Naive thymus-derived CD4-positive, alpha-beta T cell (primary cell): ENCODE measurements at regions of chr5 and their contacts with region 1.

Region 1: GRCh38 chr5:102681407-102681983 is 73.6 kb upstream of the PAM start:
- DNase-seq: peak in 7 of 9 donors; percentile 7 to 60 (median 25)
- ATAC-seq: peak; percentile 63
- H3K4me3 ChIP-seq: no peak overlapping the region
- H3K4me3 Mint-ChIP-seq: no peak overlapping the region
- H3K27ac ChIP-seq: no peak overlapping the region
- H3K27ac Mint-ChIP-seq: no peak overlapping the region
- H3K4me1 ChIP-seq: no peaks in the 10 kb centered on the region
- H3K4me1 Mint-ChIP-seq: no peaks in the 10 kb centered on the region
- H3K27me3 ChIP-seq: no peaks in the 10 kb centered on the region
- H3K27me3 Mint-ChIP-seq: peaks cover 0 to 7% (median 4%) of the 10 kb centered on the region in 5 donors

Region 2: DNA sequence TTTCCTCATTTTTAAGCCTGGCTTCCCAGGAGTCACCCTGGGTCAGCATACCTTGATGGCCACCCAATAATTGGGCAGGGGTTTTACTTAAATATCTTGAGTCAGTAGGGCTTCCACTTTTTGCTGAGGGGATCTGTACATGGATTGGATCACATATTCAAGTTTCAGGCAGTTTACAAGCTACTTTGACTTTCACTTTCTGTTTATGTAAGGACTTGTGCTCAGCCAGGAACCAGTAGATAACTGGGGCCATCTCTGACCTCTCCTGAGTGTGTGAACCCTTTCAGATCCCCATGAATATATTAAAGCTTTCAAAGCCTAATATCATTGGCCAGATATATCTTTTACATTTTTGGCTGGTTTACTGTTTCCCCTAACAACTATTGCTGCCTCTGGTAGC is 227.8 kb before region 1 on chr5:
- CTCF ChIA-PET with region 1: no interaction called
- POLR2A ChIA-PET with region 1: no interaction called
- intact Hi-C with region 1: no loop called
- DNase-seq: no peak
- ATAC-seq: no peak
- H3K4me3 ChIP-seq: no peak overlapping the region
- H3K4me3 Mint-ChIP-seq: peak overlapping the region in 1 of 10 donors; percentile 35
- H3K27ac ChIP-seq: no peak overlapping the region
- H3K27ac Mint-ChIP-seq: no peak overlapping the region
- H3K4me1 ChIP-seq: no peaks in the 10 kb centered on the region
- H3K4me1 Mint-ChIP-seq: peaks cover 0 to 8% (median 0%) of the 10 kb centered on the region in 7 donors
- H3K27me3 ChIP-seq: no peaks in the 10 kb centered on the region
- H3K27me3 Mint-ChIP-seq: peaks cover 0 to 11% (median 0%) of the 10 kb centered on the region in 5 donors

Region 3: GRCh38 chr5:102718819-102719218 is 37.3 kb after region 1 on chr5:
- CTCF ChIA-PET with region 1: no interaction called
- POLR2A ChIA-PET with region 1: no interaction called
- intact Hi-C with region 1: no loop called
- DNase-seq: no peak
- ATAC-seq: no peak
- H3K4me3 ChIP-seq: no peak overlapping the region
- H3K4me3 Mint-ChIP-seq: no peak overlapping the region
- H3K27ac ChIP-seq: no peak overlapping the region
- H3K27ac Mint-ChIP-seq: no peak overlapping the region
- H3K4me1 ChIP-seq: no peaks in the 10 kb centered on the region
- H3K4me1 Mint-ChIP-seq: no peaks in the 10 kb centered on the region
- H3K27me3 ChIP-seq: no peaks in the 10 kb centered on the region
- H3K27me3 Mint-ChIP-seq: peaks cover 20 to 39% (median 30%) of the 10 kb centered on the region in 5 donors

Region 4: GRCh38 chr5:102792705-102793104 is 111.2 kb after region 1 on chr5:
- CTCF ChIA-PET with region 1: no interaction called
- POLR2A ChIA-PET with region 1: no interaction called
- intact Hi-C with region 1: loop called in 1 of 2 experiments (anchors 1 kb)
- DNase-seq: peak in 1 of 9 donors; percentile 11
- ATAC-seq: peak; percentile 63
- H3K4me3 ChIP-seq: no peak overlapping the region
- H3K4me3 Mint-ChIP-seq: no peak overlapping the region
- H3K27ac ChIP-seq: no peak overlapping the region
- H3K27ac Mint-ChIP-seq: no peak overlapping the region
- H3K4me1 ChIP-seq: no peaks in the 10 kb centered on the region
- H3K4me1 Mint-ChIP-seq: peaks cover 0 to 24% (median 5%) of the 10 kb centered on the region in 7 donors
- H3K27me3 ChIP-seq: no peaks in the 10 kb centered on the region
- H3K27me3 Mint-ChIP-seq: no peaks in the 10 kb centered on the region

Region 5: GRCh38 chr5:102832445-102832844 is 150.9 kb after region 1 on chr5:
- CTCF ChIA-PET with region 1: no interaction called
- POLR2A ChIA-PET with region 1: no interaction called
- intact Hi-C with region 1: no loop called
- DNase-seq: no peak
- ATAC-seq: no peak
- H3K4me3 ChIP-seq: no peak overlapping the region
- H3K4me3 Mint-ChIP-seq: no peak overlapping the region
- H3K27ac ChIP-seq: no peak overlapping the region
- H3K27ac Mint-ChIP-seq: no peak overlapping the region
- H3K4me1 ChIP-seq: peaks cover 0 to 5% of the 10 kb centered on the region in 2 donors
- H3K4me1 Mint-ChIP-seq: peaks cover 4 to 29% (median 8%) of the 10 kb centered on the region in 7 donors
- H3K27me3 ChIP-seq: no peaks in the 10 kb centered on the region
- H3K27me3 Mint-ChIP-seq: peaks cover 0 to 5% (median 0%) of the 10 kb centered on the region in 5 donors

Region 6: DNA sequence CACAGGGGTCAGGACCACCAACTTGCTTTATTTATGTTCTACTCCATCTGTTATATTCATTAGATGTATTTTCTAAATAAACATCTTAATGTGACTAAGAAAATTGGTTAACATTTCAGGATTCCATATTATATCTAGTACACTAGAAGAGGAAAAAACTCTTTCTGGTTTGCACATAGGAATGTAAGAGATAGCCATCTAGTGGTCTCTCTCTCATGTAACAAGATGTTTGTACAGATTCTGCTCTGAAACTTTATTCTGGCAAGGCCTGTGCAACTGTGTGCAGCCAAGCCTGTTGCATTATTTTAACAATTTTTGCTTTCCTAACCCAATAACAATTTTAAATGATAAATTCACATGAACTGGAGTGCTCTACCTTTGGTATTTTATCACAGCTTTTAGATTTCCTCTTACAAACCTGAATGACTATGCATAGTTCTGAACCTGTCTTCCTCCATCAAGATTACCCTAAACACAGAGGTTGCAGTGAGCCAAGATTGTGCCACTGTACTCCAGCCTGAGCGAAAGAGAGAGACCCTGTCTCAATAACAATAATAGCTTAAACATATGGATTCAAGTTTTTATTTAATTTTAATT is 290.3 kb after region 1 on chr5:
- CTCF ChIA-PET with region 1: no interaction called
- POLR2A ChIA-PET with region 1: no interaction called
- intact Hi-C with region 1: loop called in 1 of 2 experiments (anchors 1 kb)
- DNase-seq: peak in 1 of 9 donors; percentile 9
- ATAC-seq: no peak
- H3K4me3 ChIP-seq: no peak overlapping the region
- H3K4me3 Mint-ChIP-seq: no peak overlapping the region
- H3K27ac ChIP-seq: no peak overlapping the region
- H3K27ac Mint-ChIP-seq: no peak overlapping the region
- H3K4me1 ChIP-seq: no peaks in the 10 kb centered on the region
- H3K4me1 Mint-ChIP-seq: peaks cover 0 to 5% (median 0%) of the 10 kb centered on the region in 7 donors
- H3K27me3 ChIP-seq: no peaks in the 10 kb centered on the region
- H3K27me3 Mint-ChIP-seq: no peaks in the 10 kb centered on the region

Region 7: DNA sequence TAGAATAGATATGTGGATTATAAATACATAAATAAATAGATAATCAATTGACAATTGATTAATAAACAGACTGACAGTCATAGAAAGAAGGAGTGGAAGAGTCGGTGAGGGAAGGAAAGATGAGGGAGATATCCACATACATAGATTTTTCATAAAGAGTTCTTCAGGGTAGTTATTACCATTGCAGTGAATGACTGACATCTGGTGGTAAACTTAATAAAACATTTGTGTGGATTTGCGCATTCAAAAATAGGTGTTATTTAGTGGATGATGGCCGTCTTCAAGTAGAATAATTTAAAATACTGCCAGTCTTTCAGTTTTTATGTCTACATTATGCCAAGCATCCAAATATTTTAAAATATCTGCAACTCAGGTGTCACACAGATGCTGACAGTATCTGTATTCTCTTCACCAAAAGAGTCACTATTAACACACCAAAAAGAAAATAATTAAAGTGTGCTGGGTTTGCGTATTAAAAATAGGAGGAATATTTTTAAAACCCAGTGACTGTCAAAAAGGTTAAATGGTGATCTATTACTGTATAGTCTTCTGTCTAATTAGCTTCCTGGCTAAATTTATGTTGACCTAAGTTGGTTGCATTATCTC is 359.7 kb after region 1 on chr5:
- CTCF ChIA-PET with region 1: no interaction called
- POLR2A ChIA-PET with region 1: no interaction called
- intact Hi-C with region 1: loop called (anchors 1 kb)
- DNase-seq: peak in 5 of 9 donors; percentile 3 to 24 (median 11)
- ATAC-seq: no peak
- H3K4me3 ChIP-seq: no peak overlapping the region
- H3K4me3 Mint-ChIP-seq: no peak overlapping the region
- H3K27ac ChIP-seq: no peak overlapping the region
- H3K27ac Mint-ChIP-seq: no peak overlapping the region
- H3K4me1 ChIP-seq: no peaks in the 10 kb centered on the region
- H3K4me1 Mint-ChIP-seq: no peaks in the 10 kb centered on the region
- H3K27me3 ChIP-seq: no peaks in the 10 kb centered on the region
- H3K27me3 Mint-ChIP-seq: peaks cover 3 to 39% (median 13%) of the 10 kb centered on the region in 5 donors

Region 8: GRCh38 chr5:103224118-103224893 is 542.8 kb after region 1 on chr5:
- CTCF ChIA-PET with region 1: no interaction called
- POLR2A ChIA-PET with region 1: no interaction called
- intact Hi-C with region 1: loop called in 1 of 2 experiments (anchors 2 kb)
- DNase-seq: peak in 8 of 9 donors; percentile 10 to 60 (median 38)
- ATAC-seq: peak; percentile 97
- H3K4me3 ChIP-seq: no peak overlapping the region
- H3K4me3 Mint-ChIP-seq: peak overlapping the region in 1 of 10 donors; percentile 21
- H3K27ac ChIP-seq: no peak overlapping the region
- H3K27ac Mint-ChIP-seq: no peak overlapping the region
- H3K4me1 ChIP-seq: no peaks in the 10 kb centered on the region
- H3K4me1 Mint-ChIP-seq: peaks cover 0 to 5% (median 0%) of the 10 kb centered on the region in 7 donors
- H3K27me3 ChIP-seq: peaks cover 0 to 4% of the 10 kb centered on the region in 2 donors
- H3K27me3 Mint-ChIP-seq: peaks cover 11 to 46% (median 27%) of the 10 kb centered on the region in 5 donors